ENCODE measurements at regions of chr5 and their contacts with region 1.

Region 1: GRCh38 chr5:79133657-79134451 is 22.2 kb downstream of the BHMT start:
- DNase-seq: no peak
- ATAC-seq: peak; percentile 62
- H3K4me3 Mint-ChIP-seq: no peak overlapping the region
- H3K27ac Mint-ChIP-seq: no peak overlapping the region
- H3K4me1 Mint-ChIP-seq: peaks cover 8% of the 10 kb centered on the region
- H3K27me3 Mint-ChIP-seq: peaks cover 5% of the 10 kb centered on the region
- CTCF ChIP-seq: no peak

Region 2: GRCh38 chr5:78221964-78222451 is 911.8 kb before region 1 on chr5:
- CTCF ChIA-PET with region 1: no interaction called
- POLR2A ChIA-PET with region 1: no interaction called
- intact Hi-C with region 1: loop called (anchors 1 kb)
- DNase-seq: peak; percentile 47
- ATAC-seq: peak; percentile 100
- H3K4me3 Mint-ChIP-seq: peak overlapping the region; percentile 1
- H3K27ac Mint-ChIP-seq: peak overlapping the region; percentile 54
- H3K4me1 Mint-ChIP-seq: peaks cover 18% of the 10 kb centered on the region
- H3K27me3 Mint-ChIP-seq: no peaks in the 10 kb centered on the region
- CTCF ChIP-seq: no peak

Region 3: GRCh38 chr5:78467752-78468357 is 666.0 kb before region 1 on chr5:
- CTCF ChIA-PET with region 1: interaction called, 17 read pairs
- POLR2A ChIA-PET with region 1: interaction called, 10 read pairs
- intact Hi-C with region 1: loop called (anchors 1 kb)
- DNase-seq: no peak
- ATAC-seq: peak; percentile 49
- H3K4me3 Mint-ChIP-seq: no peak overlapping the region
- H3K27ac Mint-ChIP-seq: no peak overlapping the region
- H3K4me1 Mint-ChIP-seq: peaks cover 3% of the 10 kb centered on the region
- H3K27me3 Mint-ChIP-seq: no peaks in the 10 kb centered on the region
- CTCF ChIP-seq: peak; percentile 32

Region 4: DNA sequence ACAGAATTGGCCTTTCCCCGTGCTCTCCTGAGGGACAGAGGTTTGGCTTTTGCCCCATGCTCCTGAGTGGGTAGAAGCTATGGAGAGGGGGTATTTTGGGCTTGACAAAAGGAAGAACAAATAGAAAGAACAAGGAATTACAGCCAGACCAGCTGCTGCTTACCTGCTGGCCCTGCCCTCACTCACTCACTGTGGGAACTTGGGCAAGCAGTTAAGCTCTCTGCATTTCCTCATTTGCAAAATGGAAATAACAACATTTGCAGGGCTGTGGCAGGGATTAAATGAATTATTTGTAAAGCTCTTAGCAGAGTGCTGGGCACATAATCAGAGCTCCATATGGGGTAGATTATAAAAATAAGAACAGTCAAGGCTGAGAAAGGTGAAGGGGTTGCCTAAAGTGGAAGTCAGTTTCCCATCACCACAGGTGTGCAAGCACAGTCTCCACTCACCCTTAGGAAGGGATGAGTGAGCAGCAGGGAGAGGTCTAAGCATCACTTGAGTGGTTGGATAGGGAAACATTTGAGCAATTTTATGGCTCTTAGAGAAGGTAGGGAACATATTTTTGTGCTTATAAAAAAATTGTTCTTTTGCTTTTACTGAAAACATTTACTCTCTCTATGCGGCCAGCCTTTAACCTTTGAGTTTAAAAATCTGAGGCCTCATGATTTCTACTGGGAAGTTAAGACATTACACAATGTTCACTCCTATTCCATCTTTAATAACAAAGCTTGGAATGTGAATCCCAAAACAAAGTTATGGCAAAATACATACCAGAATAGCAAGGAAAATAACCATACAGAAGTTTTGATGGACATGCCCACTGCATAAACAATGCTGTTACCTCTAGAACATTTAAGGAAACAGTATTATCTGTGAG is 442.5 kb before region 1 on chr5:
- CTCF ChIA-PET with region 1: no interaction called
- POLR2A ChIA-PET with region 1: no interaction called
- intact Hi-C with region 1: no loop called
- DNase-seq: no peak
- ATAC-seq: no peak
- H3K4me3 Mint-ChIP-seq: no peak overlapping the region
- H3K27ac Mint-ChIP-seq: no peak overlapping the region
- H3K4me1 Mint-ChIP-seq: peaks cover 6% of the 10 kb centered on the region
- H3K27me3 Mint-ChIP-seq: no peaks in the 10 kb centered on the region
- CTCF ChIP-seq: no peak

Region 5: DNA sequence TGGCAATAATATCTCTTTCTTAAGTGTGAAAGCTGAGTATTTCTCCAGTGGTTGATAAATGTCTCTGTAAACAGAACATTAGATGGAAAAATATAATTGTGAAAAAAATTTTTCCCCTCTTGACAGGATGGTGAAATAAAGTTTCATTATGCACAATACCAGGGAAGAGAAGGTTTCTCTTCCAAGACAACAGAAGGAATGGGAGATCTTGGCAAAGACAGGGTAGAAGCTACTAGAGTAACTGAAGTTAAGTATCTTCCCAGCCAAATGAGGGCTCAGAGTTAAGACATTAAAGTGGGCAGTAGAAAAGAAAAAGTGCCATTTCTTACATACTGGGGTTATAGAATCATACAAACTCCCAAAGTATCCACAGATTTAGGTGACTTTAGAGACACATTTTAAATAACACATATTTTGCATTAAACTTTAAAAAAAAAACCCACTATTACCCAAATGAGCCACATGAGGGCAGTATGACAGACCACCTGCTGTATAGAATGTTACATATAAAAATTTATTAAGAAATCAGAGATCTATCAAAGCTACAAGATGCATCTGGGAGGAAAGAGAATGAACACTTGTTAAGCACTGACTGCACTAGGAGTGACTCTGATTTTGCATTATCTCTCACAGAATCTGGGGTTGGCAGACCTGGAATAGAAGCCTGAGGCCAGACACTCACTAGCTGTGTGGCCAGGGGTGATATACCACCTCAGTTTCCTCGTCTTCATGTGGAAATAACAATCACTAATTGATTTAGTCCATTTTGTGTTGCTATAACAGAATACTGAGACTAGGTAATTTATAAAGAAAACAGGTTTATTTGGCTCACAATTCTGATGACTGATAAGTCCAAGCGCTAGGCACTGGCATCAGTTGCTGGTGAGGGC is 247.3 kb before region 1 on chr5:
- CTCF ChIA-PET with region 1: interaction called, 8 read pairs
- POLR2A ChIA-PET with region 1: no interaction called
- intact Hi-C with region 1: loop called (anchors 5 kb)
- DNase-seq: no peak
- ATAC-seq: no peak
- H3K4me3 Mint-ChIP-seq: no peak overlapping the region
- H3K27ac Mint-ChIP-seq: peak overlapping the region; percentile 2
- H3K4me1 Mint-ChIP-seq: peaks cover 39% of the 10 kb centered on the region
- H3K27me3 Mint-ChIP-seq: no peaks in the 10 kb centered on the region
- CTCF ChIP-seq: peak; percentile 73

Region 6: GRCh38 chr5:79020861-79021561 is 112.8 kb before region 1 on chr5:
- CTCF ChIA-PET with region 1: interaction called, 47 read pairs
- POLR2A ChIA-PET with region 1: interaction called, 12 read pairs
- intact Hi-C with region 1: loop called (anchors 1 kb)
- DNase-seq: no peak
- ATAC-seq: peak; percentile 66
- H3K4me3 Mint-ChIP-seq: no peak overlapping the region
- H3K27ac Mint-ChIP-seq: no peak overlapping the region
- H3K4me1 Mint-ChIP-seq: peaks cover 17% of the 10 kb centered on the region
- H3K27me3 Mint-ChIP-seq: peaks cover 50% of the 10 kb centered on the region
- CTCF ChIP-seq: no peak

Region 7: DNA sequence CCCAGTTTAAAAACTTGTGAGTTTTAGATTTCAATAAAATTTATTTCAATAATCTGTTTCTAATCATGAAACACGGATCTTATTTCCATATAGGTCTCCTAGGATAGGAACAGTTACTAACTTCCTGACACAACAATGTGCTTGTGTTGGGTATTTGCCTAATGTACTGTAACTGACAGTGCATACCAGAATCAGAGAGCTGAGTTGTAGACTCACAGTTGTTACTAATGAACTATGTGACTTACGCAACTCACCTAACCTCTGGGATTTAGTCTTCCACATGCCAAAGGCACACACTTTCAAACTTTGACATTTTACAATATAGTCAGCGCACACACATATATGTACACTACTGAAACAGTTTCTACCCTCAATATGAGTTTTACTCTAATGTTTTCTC is 302.4 kb after region 1 on chr5:
- CTCF ChIA-PET with region 1: no interaction called
- POLR2A ChIA-PET with region 1: no interaction called
- intact Hi-C with region 1: no loop called
- DNase-seq: no peak
- ATAC-seq: no peak
- H3K4me3 Mint-ChIP-seq: no peak overlapping the region
- H3K27ac Mint-ChIP-seq: no peak overlapping the region
- H3K4me1 Mint-ChIP-seq: peaks cover 1% of the 10 kb centered on the region
- H3K27me3 Mint-ChIP-seq: no peaks in the 10 kb centered on the region
- CTCF ChIP-seq: no peak

Region 8: DNA sequence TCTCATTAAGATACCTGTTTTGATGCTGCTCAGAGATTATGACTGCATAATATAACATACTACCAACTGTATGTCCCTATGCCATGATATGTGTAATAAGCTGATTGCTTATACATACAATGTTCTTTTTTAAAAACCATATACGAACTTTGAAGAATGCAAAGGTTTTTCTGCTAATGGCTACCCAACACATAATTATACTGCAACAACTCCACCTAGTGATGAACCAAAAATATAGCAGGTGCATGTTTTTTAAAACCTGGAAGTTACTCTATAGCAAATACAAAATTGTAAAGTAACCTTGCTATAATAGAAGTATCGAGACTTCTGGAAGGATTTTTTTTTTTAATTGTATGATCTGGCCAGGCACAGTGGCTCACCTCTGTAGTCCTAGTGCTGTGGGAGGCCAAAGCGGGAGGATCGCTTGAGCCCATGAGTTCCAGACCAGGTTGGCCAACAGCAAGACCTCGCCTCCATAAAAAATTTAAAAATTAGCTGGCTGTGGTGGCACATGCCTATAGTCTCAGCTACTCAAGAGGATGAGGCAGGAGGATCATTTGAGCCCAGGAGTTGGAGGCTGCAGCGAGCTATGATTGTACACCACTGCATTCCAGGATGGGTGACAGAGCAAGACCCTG is 331.0 kb after region 1 on chr5:
- CTCF ChIA-PET with region 1: interaction called, 41 read pairs
- POLR2A ChIA-PET with region 1: no interaction called
- intact Hi-C with region 1: no loop called
- DNase-seq: no peak
- ATAC-seq: no peak
- H3K4me3 Mint-ChIP-seq: no peak overlapping the region
- H3K27ac Mint-ChIP-seq: no peak overlapping the region
- H3K4me1 Mint-ChIP-seq: no peaks in the 10 kb centered on the region
- H3K27me3 Mint-ChIP-seq: peaks cover 1% of the 10 kb centered on the region
- CTCF ChIP-seq: no peak